ENCODE measurements at regions of chr2 and their contacts with region 1.

Region 1: DNA sequence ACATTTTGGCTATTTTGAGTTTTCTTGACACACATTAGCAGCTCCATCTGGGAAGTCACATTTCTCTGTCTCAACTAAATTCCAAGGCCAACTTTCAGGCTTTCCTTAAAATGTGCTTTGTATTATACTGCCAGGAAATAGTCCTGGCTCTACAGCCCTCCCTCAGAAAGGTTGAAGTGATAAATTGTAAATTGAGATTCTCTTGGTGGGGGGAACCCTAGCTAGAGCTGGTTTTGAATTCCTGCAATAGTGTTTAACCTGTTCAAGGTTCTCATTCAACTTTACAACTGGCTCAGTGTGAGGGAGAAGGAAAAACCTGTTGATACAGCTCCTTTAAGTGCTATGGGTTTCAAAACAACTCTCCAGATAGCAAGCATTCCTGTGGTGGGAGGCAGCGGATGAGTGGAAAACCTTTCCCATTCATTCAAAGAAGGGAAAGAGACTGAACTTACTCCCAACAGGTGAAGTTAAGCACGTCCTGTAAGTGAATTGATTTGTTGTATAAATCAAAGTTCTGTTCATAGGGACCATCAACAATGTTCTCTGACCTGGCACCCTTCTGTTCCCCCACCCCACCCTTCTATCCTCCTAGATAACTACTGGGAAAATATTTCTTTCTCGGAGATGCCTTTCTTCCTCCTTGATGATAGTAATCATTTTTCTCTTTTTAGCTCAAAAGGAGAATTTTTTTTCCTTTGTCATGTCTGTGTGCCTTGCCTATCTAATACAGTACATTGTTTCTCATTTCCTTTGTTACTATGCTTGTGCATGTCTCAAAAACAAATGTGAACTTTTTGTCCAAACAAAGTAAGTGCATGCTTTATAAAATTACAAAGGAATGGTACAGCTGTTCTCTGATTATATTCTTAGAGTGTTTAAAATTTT is 44.2 kb upstream of the SLC39A10 start:
- H3K4me3 Mint-ChIP-seq: no peak overlapping the region
- H3K27ac Mint-ChIP-seq: peak overlapping the region; percentile 46
- H3K4me1 Mint-ChIP-seq: peaks cover 24% of the 10 kb centered on the region
- H3K27me3 Mint-ChIP-seq: no peaks in the 10 kb centered on the region

Region 2: GRCh38 chr2:195458936-195459335 is 153.9 kb before region 1 on chr2:
- intact Hi-C with region 1: no loop called
- H3K4me3 Mint-ChIP-seq: no peak overlapping the region
- H3K27ac Mint-ChIP-seq: no peak overlapping the region
- H3K4me1 Mint-ChIP-seq: no peaks in the 10 kb centered on the region
- H3K27me3 Mint-ChIP-seq: no peaks in the 10 kb centered on the region

Region 3: GRCh38 chr2:195477248-195477995 is 135.4 kb before region 1 on chr2:
- intact Hi-C with region 1: no loop called
- H3K4me3 Mint-ChIP-seq: no peak overlapping the region
- H3K27ac Mint-ChIP-seq: no peak overlapping the region
- H3K4me1 Mint-ChIP-seq: peaks cover 7% of the 10 kb centered on the region
- H3K27me3 Mint-ChIP-seq: no peaks in the 10 kb centered on the region

Region 4: GRCh38 chr2:195561203-195562032 is 51.4 kb before region 1 on chr2:
- intact Hi-C with region 1: loop called (anchors 5 kb)
- H3K4me3 Mint-ChIP-seq: peak overlapping the region; percentile 50
- H3K27ac Mint-ChIP-seq: peak overlapping the region; percentile 93
- H3K4me1 Mint-ChIP-seq: peaks cover 42% of the 10 kb centered on the region
- H3K27me3 Mint-ChIP-seq: no peaks in the 10 kb centered on the region

Region 5: DNA sequence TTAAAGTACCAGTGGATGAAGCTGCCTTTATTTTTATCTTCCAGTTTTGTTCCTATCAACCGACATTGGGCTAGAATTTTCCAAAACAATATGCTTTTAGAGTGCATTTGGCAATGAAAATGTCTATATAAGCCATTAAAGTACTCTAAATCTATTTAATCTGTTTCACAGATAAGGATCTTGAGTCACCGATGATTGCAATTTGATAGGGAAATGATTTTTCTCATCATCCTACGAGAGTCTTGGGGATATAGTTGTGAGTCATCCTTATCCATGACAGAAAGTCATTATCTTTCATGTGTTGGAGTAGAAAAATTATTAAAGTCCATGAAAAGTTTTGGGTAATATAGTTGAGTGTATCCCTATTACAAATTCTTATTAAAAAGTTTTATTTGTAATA is 70.3 kb after region 1 on chr2:
- intact Hi-C with region 1: no loop called
- H3K4me3 Mint-ChIP-seq: no peak overlapping the region
- H3K27ac Mint-ChIP-seq: no peak overlapping the region
- H3K4me1 Mint-ChIP-seq: no peaks in the 10 kb centered on the region
- H3K27me3 Mint-ChIP-seq: no peaks in the 10 kb centered on the region

Region 6: GRCh38 chr2:197219636-197220035 is 1606.8 kb after region 1 on chr2:
- intact Hi-C with region 1: no loop called
- H3K4me3 Mint-ChIP-seq: no peak overlapping the region
- H3K27ac Mint-ChIP-seq: no peak overlapping the region
- H3K4me1 Mint-ChIP-seq: peaks cover 54% of the 10 kb centered on the region
- H3K27me3 Mint-ChIP-seq: no peaks in the 10 kb centered on the region

Measured in dendritic cell treated with granulocyte-macrophage colony-stimulating factor and Interleukin-4, amounts not matched to agents 40 ng/mL and 50 ng/mL, for 4 days (primary cell).